Activated B cell treated with CpG ODN at 0.5 μM for 24 hours (primary cell): ENCODE measurements at regions of chr3 and their contacts with region 1.

Region 1: DNA sequence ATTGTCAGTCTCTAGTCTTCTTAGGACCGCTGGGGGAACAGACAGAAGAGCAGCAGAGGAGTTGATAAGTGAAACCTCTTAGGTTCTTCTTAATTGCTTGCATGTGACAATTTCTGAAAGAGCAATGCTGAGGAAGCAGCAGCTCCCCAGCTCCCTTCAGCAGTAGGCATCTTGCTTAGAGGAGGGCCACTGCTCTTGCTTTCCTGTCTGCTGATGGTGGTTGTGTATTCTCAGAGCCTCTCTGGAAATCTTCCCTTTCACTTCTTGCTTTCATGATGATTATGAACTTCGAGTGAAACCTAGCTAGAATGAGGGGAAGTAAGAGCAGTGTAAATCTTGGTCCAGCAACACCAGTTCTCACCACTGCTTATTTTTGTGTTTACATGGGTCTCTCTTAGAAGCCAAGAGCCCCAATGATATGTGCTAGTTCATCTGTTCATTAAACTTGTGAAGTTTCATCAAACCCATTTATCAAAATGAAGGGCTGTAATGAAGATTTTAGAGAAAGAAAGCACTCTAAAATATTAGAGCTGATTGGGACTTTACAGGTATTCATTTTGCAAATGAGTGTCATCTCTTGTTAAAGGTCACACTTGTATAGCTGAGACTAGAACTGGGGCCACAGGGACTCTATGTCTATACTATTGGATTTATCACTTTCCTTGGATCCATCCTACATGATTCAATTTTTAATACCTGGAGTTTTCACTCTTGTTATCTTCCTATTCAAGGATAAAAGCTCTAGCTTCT is 246.7 kb downstream of the LPP start:
- DNase-seq: no peak
- ATAC-seq: peak; percentile 82
- H3K4me3 Mint-ChIP-seq: peak overlapping the region; percentile 56
- H3K27ac Mint-ChIP-seq: peak overlapping the region; percentile 91
- H3K4me1 Mint-ChIP-seq: peaks cover 93% of the 10 kb centered on the region
- H3K27me3 Mint-ChIP-seq: no peaks in the 10 kb centered on the region
- CTCF ChIP-seq: no peak

Region 2: GRCh38 chr3:188432802-188433520 is 32.3 kb after region 1 on chr3:
- CTCF ChIA-PET with region 1: interaction called, 9 read pairs
- POLR2A ChIA-PET with region 1: interaction called, 45 read pairs
- intact Hi-C with region 1: no loop called
- DNase-seq: no peak
- ATAC-seq: peak; percentile 90
- H3K4me3 Mint-ChIP-seq: peak overlapping the region; percentile 80
- H3K27ac Mint-ChIP-seq: peak overlapping the region; percentile 100
- H3K4me1 Mint-ChIP-seq: peaks cover 91% of the 10 kb centered on the region
- H3K27me3 Mint-ChIP-seq: no peaks in the 10 kb centered on the region
- CTCF ChIP-seq: no peak

Region 3: DNA sequence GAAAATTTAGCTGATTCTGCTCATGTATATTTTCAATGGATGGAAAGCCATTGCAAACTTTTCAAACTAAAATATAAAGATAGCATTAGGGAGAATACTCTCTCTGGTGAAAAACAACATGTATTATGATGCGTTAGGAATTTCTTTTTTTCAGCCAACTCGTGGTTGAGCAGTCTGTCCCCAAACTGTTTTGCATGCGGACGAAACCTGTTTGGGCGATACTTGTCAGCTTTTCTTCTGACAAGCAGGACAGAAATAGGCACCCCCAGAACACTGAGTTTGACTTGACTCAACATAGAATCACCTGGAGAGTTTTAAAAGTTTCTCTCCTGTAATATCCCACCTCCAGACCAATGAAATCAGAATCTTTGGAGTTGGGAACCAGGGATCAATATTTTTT is 353.6 kb after region 1 on chr3:
- CTCF ChIA-PET with region 1: no interaction called
- POLR2A ChIA-PET with region 1: interaction called, 13 read pairs
- intact Hi-C with region 1: loop called (anchors 5 kb)
- DNase-seq: no peak
- ATAC-seq: peak; percentile 23
- H3K4me3 Mint-ChIP-seq: peak overlapping the region; percentile 56
- H3K27ac Mint-ChIP-seq: peak overlapping the region; percentile 98
- H3K4me1 Mint-ChIP-seq: peaks cover 70% of the 10 kb centered on the region
- H3K27me3 Mint-ChIP-seq: no peaks in the 10 kb centered on the region
- CTCF ChIP-seq: no peak